ENCODE measurements at regions of chr4 and their contacts with region 1.

Region 1: DNA sequence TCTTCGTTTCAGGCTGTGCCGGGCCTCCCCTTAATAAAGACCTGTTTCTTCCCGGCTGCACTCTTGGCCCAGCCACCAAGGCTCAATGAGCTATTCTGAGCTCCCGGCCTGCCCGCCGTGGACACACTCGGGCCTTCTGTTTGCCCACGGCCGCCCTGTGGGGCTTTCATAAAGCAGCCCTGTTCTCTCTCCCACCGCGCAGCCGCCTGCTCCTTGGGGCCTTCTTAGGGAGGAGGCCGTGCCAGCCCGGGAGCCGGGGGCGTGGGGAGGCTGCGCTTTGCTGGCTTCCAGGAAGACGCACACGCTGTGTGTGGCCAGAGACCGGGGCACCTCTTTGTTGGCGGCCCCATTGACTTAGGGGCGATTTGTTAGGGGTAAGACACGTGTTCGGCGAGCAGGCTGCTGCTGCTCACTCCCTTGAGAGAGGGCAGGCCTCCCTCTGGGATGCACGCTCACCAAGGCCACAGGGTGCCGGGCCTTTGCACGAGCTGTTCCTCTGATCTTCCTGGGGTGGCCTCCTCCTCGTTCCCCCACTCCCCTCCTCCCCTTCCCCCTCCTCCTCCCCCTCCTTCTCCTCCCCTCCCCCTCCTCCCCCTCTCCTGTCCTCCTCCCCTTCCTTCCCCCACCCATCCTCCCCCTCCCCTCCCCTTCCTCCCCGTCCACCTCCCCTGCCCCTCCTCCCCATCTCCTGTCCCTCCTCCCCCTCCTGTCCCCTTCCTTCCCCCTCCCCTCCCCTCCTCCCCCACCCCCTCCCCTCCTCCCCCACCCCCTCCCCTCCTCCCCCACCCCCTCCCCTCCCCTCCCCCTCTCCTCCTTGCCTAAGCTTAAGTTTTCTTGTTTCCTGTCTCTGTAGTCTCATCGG is 11.3 kb downstream of the BLOC1S4 start:
- DNase-seq: no peak
- ATAC-seq: no peak
- H3K4me3 ChIP-seq: no peak overlapping the region
- H3K27ac ChIP-seq: no peak overlapping the region
- H3K4me1 ChIP-seq: no peaks in the 10 kb centered on the region
- H3K27me3 ChIP-seq: no peaks in the 10 kb centered on the region
- CTCF ChIP-seq: no peak
- POLR2A ChIP-seq: no peak

Region 2: DNA sequence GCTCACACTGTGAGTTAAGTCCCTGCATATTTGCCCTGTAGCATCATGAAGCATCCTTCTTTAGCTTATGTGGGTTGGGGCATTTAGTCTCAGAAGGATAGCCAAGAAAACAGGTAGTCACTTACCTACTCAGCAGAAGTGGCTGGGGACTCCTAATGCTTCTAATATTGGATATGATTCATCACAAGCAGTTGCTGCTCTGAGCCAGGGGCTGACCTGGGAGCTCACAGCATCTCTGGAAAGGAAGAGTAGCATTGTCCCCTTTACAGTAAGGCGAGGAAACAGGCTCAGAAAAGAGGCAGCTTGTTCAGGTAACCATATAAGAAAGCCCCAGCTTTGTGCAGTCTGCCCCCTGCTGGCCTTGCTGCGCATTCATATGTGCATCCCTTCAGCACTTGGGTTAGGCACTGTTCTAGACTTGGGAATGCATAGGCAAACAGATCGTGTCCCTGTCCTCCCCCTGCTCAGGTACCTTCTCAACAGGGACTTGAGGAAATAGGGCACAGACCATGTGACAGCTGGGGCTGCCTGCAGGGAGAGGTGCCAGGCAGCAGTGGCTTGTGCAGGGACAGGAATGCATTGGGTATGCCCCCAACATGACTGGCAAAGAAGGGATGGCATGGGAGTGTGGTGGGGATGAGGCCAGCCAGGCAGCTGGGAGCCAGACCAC is 146.6 kb after region 1 on chr4:
- intact Hi-C with region 1: loop called (anchors 5 kb)
- DNase-seq: peak; percentile 72 to 81 (median 76)
- ATAC-seq: peak; percentile 85
- H3K4me3 ChIP-seq: no peak overlapping the region
- H3K27ac ChIP-seq: no peak overlapping the region
- H3K4me1 ChIP-seq: no peaks in the 10 kb centered on the region
- H3K27me3 ChIP-seq: no peaks in the 10 kb centered on the region
- CTCF ChIP-seq: peak; percentile 70 to 82 (median 78)
- POLR2A ChIP-seq: no peak